Prostate gland (tissue), 2 donors: ENCODE measurements at regions of chr16 and their contacts with region 1.

Region 1: DNA sequence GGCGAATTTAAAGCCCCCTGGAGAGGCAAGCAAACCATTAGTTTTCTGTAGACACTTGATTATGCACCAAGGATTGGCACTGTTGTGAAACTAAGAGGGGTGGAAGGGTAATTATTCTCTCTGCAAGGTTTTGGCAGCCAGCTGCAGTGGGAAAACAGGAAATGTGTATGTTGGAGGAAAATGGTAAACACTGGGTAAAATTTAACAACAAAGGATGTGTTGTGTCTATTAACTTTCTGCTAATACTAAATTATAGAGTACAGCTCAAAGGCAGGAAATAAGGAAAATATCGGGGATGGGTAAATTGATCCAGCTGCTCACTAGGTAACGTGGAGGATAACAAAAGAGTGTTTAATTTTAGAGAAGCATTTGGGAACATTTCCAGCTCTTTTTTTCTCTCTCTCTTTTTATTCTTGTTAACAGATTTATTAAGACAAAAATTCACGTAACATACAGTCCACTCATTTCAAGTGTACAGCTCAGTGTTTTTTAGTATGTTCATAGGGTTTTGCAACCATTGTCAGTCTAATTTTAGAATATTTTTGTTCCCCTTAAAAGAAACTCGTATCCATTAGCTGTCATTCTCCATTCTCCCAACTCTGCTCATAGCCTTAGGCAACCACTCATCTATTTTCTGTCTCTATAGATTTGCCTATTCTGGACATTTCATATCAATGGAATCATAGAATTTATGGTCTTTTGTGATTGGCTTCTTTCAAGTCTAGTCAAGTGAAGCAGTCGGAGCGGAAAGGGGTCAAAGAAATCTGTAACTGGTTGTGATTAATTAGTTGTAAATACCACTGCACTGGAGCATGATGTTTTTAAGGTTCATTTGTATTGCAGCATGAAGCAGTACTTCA is 41.8 kb downstream of the TANGO6 start:
- DNase-seq: no peak
- H3K4me3 ChIP-seq: no peak overlapping the region
- H3K27ac ChIP-seq: peak overlapping the region in 1 of 2 donors; percentile 2
- H3K4me1 ChIP-seq: no peaks in the 10 kb centered on the region
- H3K27me3 ChIP-seq: no peaks in the 10 kb centered on the region
- CTCF ChIP-seq: no peak
- POLR2A ChIP-seq: no peak

Region 2: GRCh38 chr16:68760671-68761275 is 124.3 kb before region 1 on chr16:
- intact Hi-C with region 1: no loop called
- DNase-seq: no peak
- H3K4me3 ChIP-seq: no peak overlapping the region
- H3K27ac ChIP-seq: peak overlapping the region; percentile 45 to 47
- H3K4me1 ChIP-seq: no peaks in the 10 kb centered on the region
- H3K27me3 ChIP-seq: no peaks in the 10 kb centered on the region
- CTCF ChIP-seq: no peak
- POLR2A ChIP-seq: no peak

Region 3: GRCh38 chr16:68843482-68844210 is 41.4 kb before region 1 on chr16 and contains the start of gene TANGO6:
- intact Hi-C with region 1: loop called (anchors 5 kb)
- DNase-seq: peak; percentile 76
- H3K4me3 ChIP-seq: peak within 1 kb of the TSS; percentile 69 to 75
- H3K27ac ChIP-seq: peak within 1 kb of the TSS; percentile 83 to 84
- H3K4me1 ChIP-seq: peaks cover 2% of the 10 kb centered on the region
- H3K27me3 ChIP-seq: no peaks in the 10 kb centered on the region
- CTCF ChIP-seq: peak in 1 of 4 experiments; percentile 17
- POLR2A ChIP-seq: no peak
- total RNA-seq, gene TANGO6: 13.1 to 28.6 TPM